ENCODE measurements at regions of chr1 and their contacts with region 1.

Region 1: DNA sequence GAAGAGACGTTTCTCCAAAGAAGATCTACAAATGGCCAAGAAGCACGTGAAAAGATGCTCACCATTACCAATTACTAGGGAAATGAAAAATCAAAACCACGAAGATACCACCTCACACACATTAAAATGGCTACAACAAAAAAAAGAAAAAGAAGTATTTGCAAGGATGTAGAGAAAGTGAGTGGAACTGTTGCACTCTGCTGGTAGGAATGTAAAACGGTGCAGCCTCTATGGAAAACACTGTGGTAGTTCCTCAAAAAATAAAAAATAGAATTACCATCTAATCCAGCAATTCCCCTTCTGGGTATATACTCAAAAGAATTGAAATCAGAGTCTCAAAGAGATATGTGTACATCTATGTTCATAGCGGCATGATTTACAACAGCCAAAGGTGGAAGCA is 115.4 kb upstream of the EDN2 start:
- DNase-seq: no peak
- ATAC-seq: no peak
- H3K4me3 ChIP-seq: no peak overlapping the region
- H3K27ac ChIP-seq: no peak overlapping the region
- H3K4me1 ChIP-seq: no peaks in the 10 kb centered on the region
- H3K27me3 ChIP-seq: no peaks in the 10 kb centered on the region
- CTCF ChIP-seq: no peak
- EP300 ChIP-seq: no peak
- POLR2A ChIP-seq: no peak
- RAD21 ChIP-seq: no peak

Region 2: GRCh38 chr1:41537788-41538351 is 62.0 kb before region 1 on chr1:
- CTCF ChIA-PET with region 1: no interaction called
- POLR2A ChIA-PET with region 1: no interaction called
- RAD21 ChIA-PET with region 1: no interaction called
- SMC1A ChIA-PET with region 1: no interaction called
- in situ Hi-C with region 1: no loop called
- intact Hi-C with region 1: no loop called
- DNase-seq: no peak
- ATAC-seq: no peak
- H3K4me3 ChIP-seq: no peak overlapping the region
- H3K27ac ChIP-seq: no peak overlapping the region
- H3K4me1 ChIP-seq: peaks cover 3% of the 10 kb centered on the region; the same call in 1 of the 2 replicates
- H3K27me3 ChIP-seq: no peaks in the 10 kb centered on the region
- CTCF ChIP-seq: no peak
- EP300 ChIP-seq: no peak
- POLR2A ChIP-seq: no peak
- RAD21 ChIP-seq: no peak

Region 3: GRCh38 chr1:41613689-41614574 is 14.0 kb after region 1 on chr1:
- CTCF ChIA-PET with region 1: no interaction called
- POLR2A ChIA-PET with region 1: interaction called, 3 read pairs
- RAD21 ChIA-PET with region 1: no interaction called
- SMC1A ChIA-PET with region 1: interaction called, 11 read pairs
- in situ Hi-C with region 1: no loop called
- intact Hi-C with region 1: no loop called
- DNase-seq: no peak
- ATAC-seq: no peak
- H3K4me3 ChIP-seq: no peak overlapping the region
- H3K27ac ChIP-seq: no peak overlapping the region
- H3K4me1 ChIP-seq: no peaks in the 10 kb centered on the region
- H3K27me3 ChIP-seq: no peaks in the 10 kb centered on the region
- CTCF ChIP-seq: no peak
- EP300 ChIP-seq: no peak
- POLR2A ChIP-seq: no peak
- RAD21 ChIP-seq: no peak